PC-3 (cell line): ENCODE measurements at regions of chr15 and their contacts with region 1.

Region 1: GRCh38 chr15:31526916-31527690 is 200.5 kb downstream of the KLF13 start:
- DNase-seq: no peak
- ATAC-seq: no peak
- H3K4me3 ChIP-seq: no peak overlapping the region
- H3K27ac ChIP-seq: no peak overlapping the region
- H3K4me1 ChIP-seq: no peaks in the 10 kb centered on the region
- H3K27me3 ChIP-seq: peaks cover 46% of the 10 kb centered on the region
- CTCF ChIP-seq: no peak

Region 2: GRCh38 chr15:31516874-31517273 is 10.2 kb before region 1 on chr15:
- CTCF ChIA-PET with region 1: no interaction called
- POLR2A ChIA-PET with region 1: no interaction called
- intact Hi-C with region 1: loop called (anchors 1 kb)
- DNase-seq: no peak
- ATAC-seq: no peak
- H3K4me3 ChIP-seq: no peak overlapping the region
- H3K27ac ChIP-seq: no peak overlapping the region
- H3K4me1 ChIP-seq: no peaks in the 10 kb centered on the region
- H3K27me3 ChIP-seq: peaks cover 7% of the 10 kb centered on the region; the same call in 1 of the 2 replicates
- CTCF ChIP-seq: no peak